ENCODE measurements at regions of chr4 and their contacts with region 1.

Region 1: DNA sequence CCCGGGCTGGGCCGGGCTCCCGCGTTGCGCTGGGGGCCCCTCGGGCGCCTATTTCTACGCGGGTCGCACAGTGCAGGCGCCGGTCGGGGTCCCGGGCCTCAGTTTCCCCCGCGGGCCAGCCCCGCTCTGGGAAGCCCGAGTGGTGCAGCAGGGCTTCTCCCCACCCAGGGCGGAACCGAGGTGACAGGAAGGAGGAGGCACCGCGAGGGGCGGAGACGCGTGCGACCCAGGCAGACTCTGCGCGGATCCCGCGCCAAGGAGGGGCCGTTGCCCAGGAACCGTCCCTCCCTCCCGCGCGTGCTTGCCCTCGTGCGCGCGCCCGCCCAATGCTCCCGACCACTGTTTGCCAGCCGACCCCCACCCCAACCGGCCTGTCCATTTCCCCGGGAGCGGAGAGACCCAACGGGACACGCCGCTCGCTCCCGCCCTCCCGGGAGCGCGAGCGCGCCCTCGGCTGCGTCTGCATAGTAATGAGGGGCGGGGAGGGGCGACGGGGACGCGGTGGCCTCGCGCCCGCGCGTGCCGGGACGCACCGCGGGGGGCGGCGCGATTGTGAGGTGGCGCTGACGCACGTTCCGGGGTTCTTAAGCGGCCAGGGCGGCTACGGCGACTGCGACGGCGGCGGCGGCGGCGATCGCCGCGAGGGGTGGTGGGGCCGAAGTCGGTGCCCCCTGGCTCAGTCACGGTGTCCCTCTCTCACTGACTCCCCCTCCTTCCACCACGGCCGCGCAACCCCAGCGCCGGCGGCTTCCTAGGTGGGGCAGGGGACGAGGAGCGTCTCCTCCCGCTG is at the start of gene CPEB2:
- DNase-seq: peak; percentile 92
- H3K4me3 Mint-ChIP-seq: peak within 1 kb of the TSS; percentile 89
- H3K27ac Mint-ChIP-seq: peak within 1 kb of the TSS; percentile 95
- H3K4me1 Mint-ChIP-seq: peaks cover 7% of the 10 kb centered on the region
- H3K27me3 Mint-ChIP-seq: no peaks in the 10 kb centered on the region
- CTCF ChIP-seq: no peak
- total RNA-seq, gene CPEB2: 13.8 and 21.8 TPM in 2 replicates

Region 2: GRCh38 chr4:13705521-13706041 is 1296.5 kb before region 1 on chr4:
- CTCF ChIA-PET with region 1: no interaction called
- POLR2A ChIA-PET with region 1: interaction called, 17 read pairs
- intact Hi-C with region 1: loop called (anchors 5 kb)
- DNase-seq: peak; percentile 88
- H3K4me3 Mint-ChIP-seq: peak overlapping the region; percentile 63
- H3K27ac Mint-ChIP-seq: peak overlapping the region; percentile 95
- H3K4me1 Mint-ChIP-seq: peaks cover 57% of the 10 kb centered on the region
- H3K27me3 Mint-ChIP-seq: no peaks in the 10 kb centered on the region
- CTCF ChIP-seq: no peak

Region 3: DNA sequence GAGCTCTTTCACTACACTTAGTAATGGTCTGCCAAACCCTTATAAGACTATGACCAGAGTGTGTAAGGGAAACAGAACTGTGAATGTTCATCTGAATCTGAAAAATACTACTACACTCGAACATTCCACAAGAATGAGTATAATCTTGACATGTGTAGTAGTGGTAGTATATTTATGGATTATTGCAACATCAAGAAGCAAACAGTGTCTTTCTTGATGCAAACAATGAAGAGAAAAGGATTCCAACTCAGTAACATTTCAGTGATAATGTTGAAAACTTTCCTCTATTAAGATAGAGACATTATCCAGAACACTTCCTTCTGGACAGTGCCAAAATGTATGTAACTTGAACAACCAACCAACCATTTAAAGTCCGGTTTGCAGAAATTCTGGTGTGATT is 394.5 kb before region 1 on chr4:
- CTCF ChIA-PET with region 1: no interaction called
- POLR2A ChIA-PET with region 1: interaction called, 3 read pairs
- intact Hi-C with region 1: loop called (anchors 10 kb)
- DNase-seq: peak; percentile 30
- H3K4me3 Mint-ChIP-seq: no peak overlapping the region
- H3K27ac Mint-ChIP-seq: peak overlapping the region; percentile 71
- H3K4me1 Mint-ChIP-seq: peaks cover 14% of the 10 kb centered on the region
- H3K27me3 Mint-ChIP-seq: no peaks in the 10 kb centered on the region
- CTCF ChIP-seq: no peak

Region 4: DNA sequence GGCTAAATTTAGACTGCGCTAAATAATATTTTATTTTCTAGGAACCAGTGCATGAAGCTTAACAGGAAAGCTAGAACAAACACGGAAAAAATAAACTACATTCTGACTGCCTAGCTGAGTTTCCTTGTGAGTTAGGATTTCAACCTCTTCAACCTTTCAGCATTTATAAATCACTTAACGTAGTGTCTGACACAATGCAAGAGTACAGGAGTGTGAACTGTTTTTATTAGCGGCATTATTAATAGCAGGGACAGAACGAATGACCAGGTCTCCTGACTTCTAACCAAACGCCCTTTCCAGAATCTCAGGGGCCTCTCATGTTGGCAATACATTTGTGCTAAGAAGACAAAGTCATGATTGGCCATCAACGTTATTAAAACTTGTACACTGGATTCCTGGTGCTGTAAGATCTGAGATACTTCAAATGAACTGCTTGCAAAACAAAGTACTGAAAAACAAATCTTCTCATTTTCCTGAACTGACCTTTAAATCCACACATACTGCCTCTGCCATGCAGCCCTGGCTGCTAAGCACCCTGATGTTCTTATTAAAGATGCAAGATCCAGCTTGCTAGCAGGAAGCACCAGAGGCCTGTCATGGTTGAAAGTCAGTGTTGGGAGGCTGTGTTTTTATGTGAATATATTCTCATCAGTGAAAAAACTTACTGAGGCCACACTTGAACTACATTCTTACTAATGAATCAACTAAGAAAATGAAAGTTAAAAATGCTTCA is 380.2 kb before region 1 on chr4:
- CTCF ChIA-PET with region 1: no interaction called
- POLR2A ChIA-PET with region 1: no interaction called
- intact Hi-C with region 1: no loop called
- DNase-seq: no peak
- H3K4me3 Mint-ChIP-seq: no peak overlapping the region
- H3K27ac Mint-ChIP-seq: no peak overlapping the region
- H3K4me1 Mint-ChIP-seq: no peaks in the 10 kb centered on the region
- H3K27me3 Mint-ChIP-seq: no peaks in the 10 kb centered on the region
- CTCF ChIP-seq: no peak

Region 5: DNA sequence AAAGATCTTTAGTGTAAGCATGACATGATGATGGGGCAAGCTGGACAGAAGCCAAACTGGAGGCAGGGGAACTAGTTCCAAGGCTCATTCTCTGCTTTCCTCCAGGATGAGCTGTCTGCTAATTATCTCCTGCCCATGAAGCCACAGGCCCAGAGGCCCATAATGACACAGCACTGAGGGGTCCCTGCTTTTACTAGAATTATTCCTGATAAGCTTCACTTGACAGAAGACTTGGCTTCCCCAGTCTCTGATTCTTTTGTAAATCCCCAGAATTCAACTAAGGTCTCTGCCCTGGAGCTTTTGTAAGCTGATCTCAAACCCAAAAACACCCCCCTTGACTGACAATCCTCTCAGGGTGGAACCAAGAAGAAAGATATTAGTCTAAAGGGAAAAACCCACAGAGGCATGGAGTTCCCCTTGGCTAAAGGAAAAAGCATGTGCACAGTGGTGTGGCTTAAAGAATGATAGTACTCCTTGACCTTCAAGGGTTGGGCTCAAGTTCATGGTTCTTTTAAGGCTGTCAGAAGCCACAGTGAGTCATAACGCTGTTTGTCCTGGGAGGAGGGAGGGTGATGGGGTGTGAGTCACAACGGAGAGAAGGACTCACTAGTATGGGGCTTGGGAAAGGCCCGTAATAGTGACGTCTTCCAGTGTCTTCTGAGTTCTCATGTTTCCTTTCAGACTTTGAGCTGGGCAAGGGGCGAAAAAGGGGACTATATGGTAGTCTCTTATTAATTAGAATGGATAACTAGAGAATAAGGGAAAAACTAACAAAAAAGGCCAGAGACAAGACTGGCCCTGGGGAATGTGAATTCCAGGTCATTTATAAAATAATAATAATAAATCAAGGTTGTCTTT is 145.8 kb before region 1 on chr4:
- CTCF ChIA-PET with region 1: interaction called, 4 read pairs
- POLR2A ChIA-PET with region 1: interaction called, 23 read pairs
- intact Hi-C with region 1: loop called (anchors 5 kb)
- DNase-seq: peak; percentile 99
- H3K4me3 Mint-ChIP-seq: peak overlapping the region; percentile 8
- H3K27ac Mint-ChIP-seq: peak overlapping the region; percentile 99
- H3K4me1 Mint-ChIP-seq: peaks cover 34% of the 10 kb centered on the region
- H3K27me3 Mint-ChIP-seq: no peaks in the 10 kb centered on the region
- CTCF ChIP-seq: no peak

Region 6: DNA sequence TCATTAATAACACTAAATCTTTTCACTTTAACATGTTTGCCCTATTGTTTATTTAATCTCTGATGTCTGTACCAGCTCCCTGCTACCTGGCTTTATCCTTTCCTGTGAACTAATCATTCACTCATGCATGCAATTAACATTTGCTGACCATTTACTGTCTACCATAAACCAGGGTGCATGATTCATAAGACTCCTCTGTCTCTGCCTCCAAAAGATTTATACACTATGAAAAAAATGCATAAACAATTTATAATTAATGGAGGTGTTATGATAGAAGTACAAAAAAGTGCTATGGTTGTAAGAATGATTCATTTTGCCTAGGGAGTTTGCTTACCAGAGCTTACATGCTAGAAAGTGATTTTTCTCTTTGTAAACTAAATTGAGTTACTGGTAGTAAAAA is 24.2 kb before region 1 on chr4:
- CTCF ChIA-PET with region 1: interaction called, 3 read pairs
- POLR2A ChIA-PET with region 1: interaction called, 12 read pairs
- intact Hi-C with region 1: no loop called
- DNase-seq: no peak
- H3K4me3 Mint-ChIP-seq: no peak overlapping the region
- H3K27ac Mint-ChIP-seq: no peak overlapping the region
- H3K4me1 Mint-ChIP-seq: no peaks in the 10 kb centered on the region
- H3K27me3 Mint-ChIP-seq: no peaks in the 10 kb centered on the region
- CTCF ChIP-seq: no peak

Region 7: GRCh38 chr4:15117270-15117946 is 115.3 kb after region 1 on chr4:
- CTCF ChIA-PET with region 1: no interaction called
- POLR2A ChIA-PET with region 1: no interaction called
- intact Hi-C with region 1: no loop called
- DNase-seq: no peak
- H3K4me3 Mint-ChIP-seq: no peak overlapping the region
- H3K27ac Mint-ChIP-seq: peak overlapping the region; percentile 24
- H3K4me1 Mint-ChIP-seq: no peaks in the 10 kb centered on the region
- H3K27me3 Mint-ChIP-seq: no peaks in the 10 kb centered on the region
- CTCF ChIP-seq: no peak

Region 8: DNA sequence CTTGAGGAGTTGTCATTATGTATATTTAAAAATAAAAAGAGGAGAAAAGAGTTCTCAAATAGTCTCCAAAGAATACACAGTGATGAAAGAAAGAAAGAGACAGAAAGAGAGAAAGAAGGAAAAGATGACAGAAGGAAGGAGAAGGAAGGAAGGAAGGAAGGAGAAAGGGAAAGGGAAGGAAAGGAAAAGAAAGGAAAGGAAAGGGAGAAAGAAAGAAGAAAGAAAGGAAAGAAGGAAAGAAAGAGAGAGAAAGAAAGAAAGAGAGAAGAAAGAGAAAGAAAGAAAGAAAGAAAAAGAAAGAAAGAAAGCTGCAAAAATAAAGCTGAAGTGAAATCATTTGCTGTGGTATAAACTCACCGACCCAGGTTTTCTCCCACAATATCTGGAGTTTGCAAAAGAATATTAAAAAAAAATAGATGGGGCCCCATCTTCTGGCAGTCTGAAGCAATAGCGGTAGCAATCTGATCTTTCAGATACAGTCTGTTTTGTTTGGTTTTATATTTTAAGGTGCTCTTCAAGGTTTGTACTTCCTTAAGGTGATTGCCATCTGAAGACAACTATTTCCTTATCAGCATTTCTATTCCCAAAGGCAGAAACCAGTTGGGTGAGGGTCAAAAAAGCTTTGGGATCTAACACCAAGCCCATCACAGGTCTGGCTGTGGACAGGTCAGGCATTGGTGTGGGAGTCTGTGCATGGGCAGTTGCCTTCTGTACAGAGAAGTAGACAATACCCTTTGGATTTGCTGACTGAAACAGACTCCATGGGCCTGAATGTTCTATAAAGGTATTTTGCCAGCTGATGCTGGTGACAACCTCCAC is 160.6 kb after region 1 on chr4:
- CTCF ChIA-PET with region 1: interaction called, 3 read pairs
- POLR2A ChIA-PET with region 1: interaction called, 5 read pairs
- intact Hi-C with region 1: loop called (anchors 1 kb)
- DNase-seq: peak; percentile 51
- H3K4me3 Mint-ChIP-seq: no peak overlapping the region
- H3K27ac Mint-ChIP-seq: peak overlapping the region; percentile 28
- H3K4me1 Mint-ChIP-seq: peaks cover 12% of the 10 kb centered on the region
- H3K27me3 Mint-ChIP-seq: no peaks in the 10 kb centered on the region
- CTCF ChIP-seq: peak; percentile 58

Measured in MCF 10A (cell line).